ENCODE measurements at regions of chr5 and their contacts with region 1.

Region 1: GRCh38 chr5:149561848-149562247 is 10.6 kb upstream of the CSNK1A1 start:
- DNase-seq: peak; percentile 37
- H3K4me3 Mint-ChIP-seq: peak overlapping the region; percentile 63
- H3K27ac Mint-ChIP-seq: peak overlapping the region; percentile 87
- H3K4me1 Mint-ChIP-seq: peaks cover 36% of the 10 kb centered on the region
- H3K27me3 Mint-ChIP-seq: no peaks in the 10 kb centered on the region
- CTCF ChIP-seq: no peak

Region 2: DNA sequence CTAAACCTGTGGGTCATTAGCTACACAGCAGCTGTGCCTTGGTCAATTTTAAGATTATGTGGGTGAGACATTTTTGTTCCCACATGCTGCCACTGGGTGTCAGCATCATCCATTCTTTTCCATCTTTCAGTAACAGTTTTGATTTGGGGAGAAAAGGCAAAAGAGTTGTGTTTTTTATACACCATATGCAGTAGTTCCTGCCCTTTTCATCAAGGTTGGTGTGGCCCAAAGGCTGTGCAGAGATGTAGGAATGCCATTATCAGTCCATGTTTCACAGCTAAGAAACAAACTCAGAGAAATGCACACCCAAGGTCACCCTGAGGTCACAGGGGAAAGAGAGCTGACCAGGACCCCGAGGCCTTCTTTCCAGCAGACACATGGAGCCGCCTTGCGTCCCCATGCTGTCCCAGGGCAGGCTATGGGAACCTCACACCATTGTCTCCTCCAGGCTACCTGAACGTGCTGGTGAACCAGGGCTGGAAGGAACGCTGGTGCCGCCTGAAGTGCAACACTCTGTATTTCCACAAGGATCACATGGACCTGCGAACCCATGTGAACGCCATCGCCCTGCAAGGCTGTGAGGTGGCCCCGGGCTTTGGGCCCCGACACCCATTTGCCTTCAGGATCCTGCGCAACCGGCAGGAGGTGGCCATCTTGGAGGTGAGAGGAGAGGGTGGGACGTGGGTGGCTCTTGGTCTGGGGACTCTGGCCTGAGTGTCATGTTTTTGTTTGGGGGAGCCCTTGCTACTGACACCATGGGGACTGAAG is 244.4 kb before region 1 on chr5:
- CTCF ChIA-PET with region 1: no interaction called
- intact Hi-C with region 1: loop called (anchors 5 kb)
- DNase-seq: peak; percentile 44
- H3K4me3 Mint-ChIP-seq: no peak overlapping the region
- H3K27ac Mint-ChIP-seq: no peak overlapping the region
- H3K4me1 Mint-ChIP-seq: peaks cover 15% of the 10 kb centered on the region
- H3K27me3 Mint-ChIP-seq: no peaks in the 10 kb centered on the region
- CTCF ChIP-seq: peak; percentile 65

Region 3: GRCh38 chr5:149381987-149382340 is 179.9 kb before region 1 on chr5:
- CTCF ChIA-PET with region 1: interaction called, 8 read pairs
- intact Hi-C with region 1: loop called (anchors 1 kb)
- DNase-seq: peak; percentile 88
- H3K4me3 Mint-ChIP-seq: no peak overlapping the region
- H3K27ac Mint-ChIP-seq: no peak overlapping the region
- H3K4me1 Mint-ChIP-seq: no peaks in the 10 kb centered on the region
- H3K27me3 Mint-ChIP-seq: peaks cover 39% of the 10 kb centered on the region
- CTCF ChIP-seq: peak; percentile 93

Region 4: GRCh38 chr5:149439899-149440561 is 121.8 kb before region 1 on chr5:
- CTCF ChIA-PET with region 1: interaction called, 11 read pairs
- intact Hi-C with region 1: loop called (anchors 2 kb)
- DNase-seq: peak; percentile 93
- H3K4me3 Mint-ChIP-seq: peak overlapping the region; percentile 6
- H3K27ac Mint-ChIP-seq: peak overlapping the region; percentile 81
- H3K4me1 Mint-ChIP-seq: peaks cover 41% of the 10 kb centered on the region
- H3K27me3 Mint-ChIP-seq: no peaks in the 10 kb centered on the region
- CTCF ChIP-seq: peak; percentile 86

Region 5: DNA sequence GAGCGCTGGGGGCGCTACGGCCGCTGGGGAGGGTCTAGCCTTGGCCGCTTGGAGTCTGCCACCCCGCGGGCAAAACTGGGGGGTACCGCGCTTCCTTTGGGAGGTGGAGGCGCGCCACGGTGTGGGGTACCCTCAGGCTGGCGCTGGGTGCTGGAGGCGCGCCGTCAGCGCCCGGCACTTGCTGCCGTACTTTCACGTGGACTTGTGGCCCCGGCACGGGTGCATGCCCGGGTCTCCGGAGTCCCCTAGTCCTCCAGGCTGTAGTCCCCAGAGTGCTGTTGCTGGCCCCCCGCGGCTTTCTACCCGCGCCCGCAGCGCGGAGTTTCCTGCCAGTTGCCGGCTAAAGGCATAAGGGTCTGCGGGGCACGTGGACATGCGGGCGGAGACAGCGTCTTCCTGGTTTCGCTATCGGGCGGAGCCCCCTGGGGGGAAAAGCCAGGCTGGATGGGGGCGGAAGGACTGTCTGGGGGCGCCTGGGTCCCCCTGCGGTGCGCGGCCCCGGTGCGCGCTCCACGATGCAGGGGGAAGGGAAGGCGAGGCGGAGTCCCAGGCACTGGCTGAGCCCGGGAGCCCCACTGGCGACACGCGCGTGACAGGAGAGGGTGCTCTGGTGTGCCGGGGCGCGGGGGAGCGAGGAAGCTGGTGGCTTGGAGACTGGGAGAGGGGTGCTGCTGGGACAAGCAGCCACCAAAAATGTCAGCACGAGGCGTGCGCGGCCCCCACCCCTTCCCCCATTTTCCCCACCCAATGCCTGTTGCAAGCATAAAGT is 169.0 kb after region 1 on chr5:
- CTCF ChIA-PET with region 1: no interaction called
- intact Hi-C with region 1: no loop called
- DNase-seq: peak; percentile 58
- H3K4me3 Mint-ChIP-seq: peak overlapping the region; percentile 96
- H3K27ac Mint-ChIP-seq: peak overlapping the region; percentile 60
- H3K4me1 Mint-ChIP-seq: peaks cover 25% of the 10 kb centered on the region
- H3K27me3 Mint-ChIP-seq: peaks cover 13% of the 10 kb centered on the region
- CTCF ChIP-seq: no peak